ENCODE measurements at regions of chr1 and their contacts with region 1.

Region 1: DNA sequence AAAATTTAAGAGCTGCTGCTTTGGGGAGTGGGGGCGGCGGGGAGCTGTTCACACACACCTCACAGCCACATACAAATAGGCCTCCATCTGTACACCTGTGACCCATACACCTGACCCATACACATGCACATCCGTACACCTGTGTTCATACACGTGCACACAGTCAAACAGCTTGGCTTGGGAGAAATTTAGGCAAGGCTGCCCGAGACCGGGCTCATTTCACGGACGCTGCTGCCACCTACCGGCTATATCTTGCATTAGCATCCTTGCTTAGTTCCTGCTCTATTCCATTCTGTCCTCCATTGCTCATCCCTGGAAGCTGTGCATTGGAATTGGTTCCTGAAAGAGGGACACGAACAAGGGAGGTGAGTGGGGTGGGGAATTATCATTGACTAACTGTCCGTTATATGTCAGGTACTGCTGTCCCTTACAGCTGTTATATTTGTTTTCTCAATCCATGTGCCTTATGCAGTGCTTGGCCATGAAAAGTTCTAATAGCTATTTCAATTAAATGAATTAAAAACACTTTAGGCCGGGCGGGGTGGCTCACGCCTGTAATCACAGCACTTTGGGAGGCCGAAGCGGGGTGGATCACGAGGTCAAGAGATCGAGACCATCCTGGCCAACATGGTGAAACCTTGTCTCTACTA is 37.1 kb upstream of the EPB41 start:
- DNase-seq: peak; percentile 84
- H3K4me3 Mint-ChIP-seq: no peak overlapping the region
- H3K27ac Mint-ChIP-seq: no peak overlapping the region
- H3K4me1 Mint-ChIP-seq: peaks cover 10% of the 10 kb centered on the region
- H3K27me3 Mint-ChIP-seq: peaks cover 38% of the 10 kb centered on the region

Region 2: DNA sequence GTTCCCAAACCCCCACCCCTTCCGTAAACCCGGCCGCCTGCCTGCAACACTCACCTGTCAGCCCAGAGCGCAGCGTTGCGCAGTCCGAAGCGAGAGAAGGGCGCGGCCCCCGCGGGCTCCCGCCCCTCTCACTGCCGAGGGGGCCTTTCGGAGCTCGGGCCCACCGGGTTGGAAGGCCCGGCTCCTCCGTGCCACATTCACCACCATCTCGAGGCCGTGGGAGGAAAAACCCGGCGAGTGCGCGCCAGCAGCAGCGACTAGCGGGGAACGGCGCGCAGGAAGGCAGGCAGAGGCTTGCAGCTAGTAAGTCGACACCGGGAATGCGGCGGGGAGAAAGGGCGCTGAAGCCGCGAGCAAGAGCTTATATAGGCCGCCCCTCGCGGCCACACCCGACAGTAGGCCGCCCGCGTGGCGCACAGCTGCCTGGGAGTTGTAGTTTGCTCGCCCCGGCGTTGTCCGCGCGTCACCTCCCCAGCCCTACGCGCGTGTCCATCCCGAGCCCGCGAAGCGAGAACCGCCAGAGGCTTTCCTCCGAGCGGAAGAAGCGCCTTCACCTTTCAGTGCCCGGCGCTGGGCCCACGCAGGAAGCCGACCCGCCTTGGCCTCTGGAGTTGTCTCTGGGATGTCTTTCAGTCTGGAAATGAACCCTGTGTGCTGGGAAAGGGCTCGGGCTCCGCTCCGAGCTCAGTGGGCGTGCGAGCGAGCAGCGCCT is 295.6 kb before region 1 on chr1:
- CTCF ChIA-PET with region 1: interaction called, 18 read pairs
- DNase-seq: peak; percentile 95
- H3K4me3 Mint-ChIP-seq: peak overlapping the region; percentile 85
- H3K27ac Mint-ChIP-seq: peak overlapping the region; percentile 89
- H3K4me1 Mint-ChIP-seq: peaks cover 41% of the 10 kb centered on the region
- H3K27me3 Mint-ChIP-seq: no peaks in the 10 kb centered on the region

Region 3: GRCh38 chr1:28775121-28775944 is 101.9 kb before region 1 on chr1:
- CTCF ChIA-PET with region 1: interaction called, 13 read pairs
- DNase-seq: peak; percentile 78
- H3K4me3 Mint-ChIP-seq: peak overlapping the region; percentile 72
- H3K27ac Mint-ChIP-seq: peak overlapping the region; percentile 70
- H3K4me1 Mint-ChIP-seq: peaks cover 15% of the 10 kb centered on the region
- H3K27me3 Mint-ChIP-seq: peaks cover 25% of the 10 kb centered on the region

Region 4: DNA sequence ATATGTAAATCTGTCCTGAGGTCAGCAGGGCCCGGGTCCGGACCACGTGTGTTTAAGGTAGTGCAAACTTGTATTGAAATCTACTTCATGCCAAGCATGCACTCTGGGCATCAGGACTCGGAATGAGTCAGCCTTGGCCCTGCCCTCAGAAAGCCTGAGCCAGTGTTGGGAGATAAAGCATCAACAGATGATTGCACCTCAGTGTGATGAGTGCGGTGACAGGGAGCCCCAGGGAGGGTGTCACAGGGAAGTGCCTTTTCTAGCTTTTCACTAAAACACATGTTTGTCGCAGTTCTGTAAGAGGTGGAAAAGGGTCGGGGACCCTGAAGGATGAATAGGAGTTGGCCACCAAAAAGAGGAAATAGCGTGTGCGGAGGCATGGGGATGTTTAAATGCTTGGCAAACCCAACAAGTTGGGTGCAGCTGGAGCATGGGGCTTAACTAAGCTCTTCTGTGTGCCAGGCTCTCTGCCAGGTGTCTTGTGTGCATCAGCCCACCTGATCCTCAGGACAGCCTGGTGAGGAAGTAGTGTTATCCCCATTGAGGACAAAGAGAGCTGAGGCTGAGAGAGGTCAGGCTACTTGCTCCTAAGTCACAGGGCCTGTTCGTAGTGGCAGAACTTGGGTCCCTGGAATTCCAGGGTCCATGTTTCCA is 11.1 kb before region 1 on chr1:
- CTCF ChIA-PET with region 1: interaction called, 36 read pairs
- DNase-seq: no peak
- H3K4me3 Mint-ChIP-seq: no peak overlapping the region
- H3K27ac Mint-ChIP-seq: no peak overlapping the region
- H3K4me1 Mint-ChIP-seq: no peaks in the 10 kb centered on the region
- H3K27me3 Mint-ChIP-seq: peaks cover 54% of the 10 kb centered on the region

Region 5: GRCh38 chr1:28890435-28890834 is 13.2 kb after region 1 on chr1:
- CTCF ChIA-PET with region 1: no interaction called
- DNase-seq: no peak
- H3K4me3 Mint-ChIP-seq: no peak overlapping the region
- H3K27ac Mint-ChIP-seq: no peak overlapping the region
- H3K4me1 Mint-ChIP-seq: peaks cover 44% of the 10 kb centered on the region
- H3K27me3 Mint-ChIP-seq: no peaks in the 10 kb centered on the region

Region 6: DNA sequence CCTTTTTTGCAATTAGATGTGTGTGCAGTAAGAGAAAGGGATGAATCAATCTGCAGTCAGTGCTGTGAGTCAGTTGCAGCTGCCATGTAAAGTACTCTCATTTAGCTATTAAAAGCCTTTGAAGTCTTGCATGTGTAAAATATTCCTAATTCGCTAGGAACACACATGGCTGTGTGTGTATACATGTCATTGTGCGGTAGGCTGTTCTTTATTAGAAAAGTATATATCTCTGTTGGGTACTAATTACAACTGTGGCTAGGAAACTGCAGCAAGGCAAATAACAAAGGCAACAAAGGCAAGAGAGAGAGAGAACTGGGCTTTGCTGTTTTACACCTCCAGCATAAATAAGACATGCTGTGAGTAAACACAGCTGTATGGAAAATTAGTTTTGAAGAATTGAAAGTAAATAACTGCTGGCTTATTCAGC is 78.8 kb after region 1 on chr1:
- CTCF ChIA-PET with region 1: no interaction called
- DNase-seq: no peak
- H3K4me3 Mint-ChIP-seq: no peak overlapping the region
- H3K27ac Mint-ChIP-seq: no peak overlapping the region
- H3K4me1 Mint-ChIP-seq: peaks cover 14% of the 10 kb centered on the region
- H3K27me3 Mint-ChIP-seq: no peaks in the 10 kb centered on the region

Region 7: DNA sequence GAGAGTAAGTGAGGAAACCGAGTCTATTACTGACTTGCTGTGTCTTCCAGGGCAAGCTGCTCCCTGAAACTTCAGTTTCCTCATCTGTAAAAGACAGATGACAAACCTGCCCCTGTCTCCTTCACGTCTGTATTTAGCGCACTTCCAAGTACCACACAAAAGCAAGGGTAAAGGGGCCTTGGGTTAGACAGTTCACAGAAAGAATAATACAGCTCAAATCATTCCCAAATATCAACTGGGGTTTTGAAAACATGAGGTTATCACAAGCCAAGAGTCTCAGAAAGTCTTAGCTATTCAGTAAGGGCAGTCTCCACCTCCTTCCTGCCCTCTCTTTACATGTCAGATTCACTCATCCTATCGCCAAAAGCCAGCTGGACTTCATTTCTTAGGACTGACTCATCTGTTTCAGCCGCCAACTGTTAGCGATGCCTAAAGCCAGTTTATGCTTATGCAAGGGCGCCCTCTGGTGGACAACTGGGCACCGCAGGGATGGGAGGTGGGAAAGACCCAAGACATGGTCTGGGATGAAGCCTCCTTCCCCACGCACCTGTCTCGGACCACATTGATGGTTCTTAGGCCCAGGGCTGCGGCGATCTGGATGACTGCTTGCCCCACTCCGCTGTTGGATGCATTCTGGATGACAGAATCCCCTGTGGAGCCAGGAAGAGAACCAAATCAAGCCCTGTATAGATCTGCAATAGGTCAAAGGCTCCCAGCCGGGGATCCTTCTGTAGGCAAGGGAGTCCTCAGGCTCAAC is 325.5 kb after region 1 on chr1:
- CTCF ChIA-PET with region 1: interaction called, 221 read pairs
- DNase-seq: peak; percentile 92
- H3K4me3 Mint-ChIP-seq: no peak overlapping the region
- H3K27ac Mint-ChIP-seq: no peak overlapping the region
- H3K4me1 Mint-ChIP-seq: peaks cover 3% of the 10 kb centered on the region
- H3K27me3 Mint-ChIP-seq: no peaks in the 10 kb centered on the region

Measured in activated naive CD4-positive, alpha-beta T cell treated with anti-CD3 and anti-CD28 coated beads, Interleukin-2, amount 10 ng/mL, durations not matched to agents 7 days and 5 days (primary cell).